CD8-positive, alpha-beta memory T cell (primary cell): ENCODE measurements at regions of chr18 and their contacts with region 1.

Region 1: GRCh38 chr18:11980555-11981382 is 538 bp upstream of the IMPA2 start:
- DNase-seq: peak; percentile 91 to 95 (median 93)
- H3K4me3 ChIP-seq: peak overlapping the region; percentile 64
- H3K4me3 Mint-ChIP-seq: peak overlapping the region; percentile 84 to 93 (median 86)
- H3K27ac ChIP-seq: peak overlapping the region; percentile 30
- H3K27ac Mint-ChIP-seq: peak overlapping the region in 7 of 8 donors; percentile 13 to 84 (median 67)
- H3K4me1 ChIP-seq: peaks cover 12% of the 10 kb centered on the region
- H3K4me1 Mint-ChIP-seq: peaks cover 11 to 16% (median 14%) of the 10 kb centered on the region in 3 donors
- H3K27me3 ChIP-seq: no peaks in the 10 kb centered on the region
- H3K27me3 Mint-ChIP-seq: no peaks in the 10 kb centered on the region

Region 2: DNA sequence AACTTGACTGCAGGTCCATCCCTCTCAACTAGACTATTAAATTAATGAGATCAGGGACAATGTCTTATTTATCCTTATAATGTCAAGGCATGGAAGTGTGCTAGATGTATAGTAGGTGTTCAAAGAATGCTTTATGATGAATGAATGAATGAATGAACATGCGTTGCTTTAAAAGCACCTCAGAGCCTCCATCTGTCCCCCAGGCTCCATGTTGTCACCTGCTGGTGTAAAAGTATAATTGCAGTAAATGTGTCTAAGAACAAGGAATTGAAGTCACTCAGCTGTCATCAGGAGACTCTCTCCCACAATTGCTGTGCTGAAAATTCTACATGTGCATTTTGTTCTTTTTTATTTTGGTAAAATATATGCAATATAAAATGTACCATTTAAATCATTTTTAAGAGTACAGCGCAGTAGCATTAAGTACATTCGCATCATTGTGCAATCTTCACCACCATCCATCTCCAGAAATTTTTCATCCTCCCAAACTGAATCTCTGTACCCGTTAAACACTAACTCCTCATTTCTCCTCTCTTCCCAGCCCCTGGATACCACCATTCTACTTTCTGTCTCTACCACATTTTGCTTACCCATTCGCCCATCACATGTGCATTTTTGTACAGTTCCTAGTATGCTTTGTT is 239.1 kb before region 1 on chr18:
- CTCF ChIA-PET with region 1: no interaction called
- POLR2A ChIA-PET with region 1: interaction called, 10 read pairs
- DNase-seq: no peak
- H3K4me3 ChIP-seq: no peak overlapping the region
- H3K4me3 Mint-ChIP-seq: no peak overlapping the region
- H3K27ac ChIP-seq: no peak overlapping the region
- H3K27ac Mint-ChIP-seq: peak overlapping the region in 1 of 8 donors; percentile 3
- H3K4me1 ChIP-seq: no peaks in the 10 kb centered on the region
- H3K4me1 Mint-ChIP-seq: no peaks in the 10 kb centered on the region
- H3K27me3 ChIP-seq: peaks cover 3% of the 10 kb centered on the region
- H3K27me3 Mint-ChIP-seq: peaks cover 28 to 39% of the 10 kb centered on the region in 2 donors

Region 3: DNA sequence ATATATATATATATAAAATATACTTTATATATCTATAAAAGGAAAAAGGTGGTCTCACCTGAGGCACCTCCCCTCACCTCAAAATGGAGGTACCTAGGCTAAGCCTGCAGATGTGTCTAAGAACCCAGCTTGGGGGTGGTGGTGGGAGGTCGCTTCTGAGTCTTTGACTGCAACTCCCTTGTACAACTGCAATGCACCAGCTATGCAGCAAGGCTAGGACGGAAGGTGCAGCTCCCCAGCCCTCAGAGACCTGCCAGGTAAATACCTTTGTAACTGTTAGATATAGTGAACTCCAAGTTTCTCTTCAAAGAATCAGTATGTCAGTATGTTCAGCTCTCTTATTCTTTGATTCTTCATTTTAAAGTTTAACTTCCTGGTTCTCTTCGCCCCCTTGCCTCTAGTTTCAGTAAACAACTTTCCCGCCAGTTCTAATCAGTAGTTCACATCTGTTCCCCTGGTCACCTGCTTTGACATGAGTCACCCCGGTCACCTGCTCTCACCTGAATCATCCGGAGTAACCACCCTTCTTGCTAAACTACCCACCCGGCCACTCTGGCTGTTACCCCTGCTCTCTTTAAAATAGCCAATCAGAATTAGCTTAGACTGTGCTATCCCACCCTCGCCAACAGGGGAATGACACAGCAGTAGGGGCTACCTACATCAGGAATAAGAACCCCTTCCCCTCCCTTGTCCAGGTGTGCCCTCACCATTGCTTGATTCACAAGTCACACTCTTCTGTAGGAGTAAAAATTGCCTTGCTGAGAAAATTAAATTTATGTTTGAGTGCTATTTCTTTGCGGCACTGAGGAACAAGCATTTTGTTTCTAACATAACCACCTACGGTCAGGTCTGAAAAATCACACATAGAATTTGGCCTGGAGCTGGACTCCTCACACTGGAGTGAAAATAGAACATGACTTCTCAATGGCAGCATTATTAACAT is 24.1 kb before region 1 on chr18:
- CTCF ChIA-PET with region 1: no interaction called
- POLR2A ChIA-PET with region 1: no interaction called
- DNase-seq: no peak
- H3K4me3 ChIP-seq: no peak overlapping the region
- H3K4me3 Mint-ChIP-seq: no peak overlapping the region
- H3K27ac ChIP-seq: no peak overlapping the region
- H3K27ac Mint-ChIP-seq: peak overlapping the region in 1 of 8 donors; percentile 91
- H3K4me1 ChIP-seq: no peaks in the 10 kb centered on the region
- H3K4me1 Mint-ChIP-seq: no peaks in the 10 kb centered on the region
- H3K27me3 ChIP-seq: no peaks in the 10 kb centered on the region
- H3K27me3 Mint-ChIP-seq: peaks cover 6% of the 10 kb centered on the region in 2 donors